ENCODE measurements at regions of chr2 and their contacts with region 1.

Region 1: GRCh38 chr2:112584134-112584890 is at the start of gene CHCHD5:
- DNase-seq: peak; percentile 86 to 97 (median 90)
- ATAC-seq: peak; percentile 92
- H3K4me3 ChIP-seq: peak within 1 kb of the TSS; percentile 65
- H3K27ac ChIP-seq: peak within 1 kb of the TSS; percentile 96
- H3K4me1 ChIP-seq: peaks cover 16 to 19% of the 10 kb centered on the region in 2 experiments; a peak in 4 of 5 replicates
- H3K27me3 ChIP-seq: no peaks in the 10 kb centered on the region
- CTCF ChIP-seq: peak; percentile 5 to 38 (median 18); a peak in 3 of 6 replicates
- EP300 ChIP-seq: peak; percentile 65
- POLR2A ChIP-seq: peak; percentile 95
- RAD21 ChIP-seq: no peak
- polyA plus RNA-seq, gene CHCHD5: 56.0 to 79.3 TPM

Region 2: GRCh38 chr2:111883661-111884591 is 700.4 kb before region 1 on chr2 and contains the start of gene ANAPC1:
- CTCF ChIA-PET with region 1: no interaction called
- POLR2A ChIA-PET with region 1: no interaction called
- in situ Hi-C with region 1: no loop called
- intact Hi-C with region 1: loop called (anchors 5 kb)
- DNase-seq: peak; percentile 84 to 94 (median 86)
- ATAC-seq: peak; percentile 95
- H3K4me3 ChIP-seq: peak within 1 kb of the TSS; percentile 98
- H3K27ac ChIP-seq: peak within 1 kb of the TSS; percentile 92
- H3K4me1 ChIP-seq: peaks cover 0 to 8% of the 10 kb centered on the region in 2 experiments; a peak in 3 of 5 replicates
- H3K27me3 ChIP-seq: no peaks in the 10 kb centered on the region
- CTCF ChIP-seq: no peak
- EP300 ChIP-seq: no peak
- POLR2A ChIP-seq: peak; percentile 98
- RAD21 ChIP-seq: no peak
- polyA plus RNA-seq, gene ANAPC1: 14.0 to 18.9 TPM

Region 3: GRCh38 chr2:112048887-112049286 is 535.4 kb before region 1 on chr2:
- CTCF ChIA-PET with region 1: interaction called, 10 read pairs
- POLR2A ChIA-PET with region 1: no interaction called
- in situ Hi-C with region 1: no loop called
- intact Hi-C with region 1: loop called (anchors 2 kb)
- DNase-seq: peak; percentile 27 to 68 (median 37)
- ATAC-seq: peak; percentile 87
- H3K4me3 ChIP-seq: no peak overlapping the region
- H3K27ac ChIP-seq: no peak overlapping the region
- H3K4me1 ChIP-seq: peaks cover 8 to 17% of the 10 kb centered on the region in 2 experiments; a peak in 4 of 5 replicates
- H3K27me3 ChIP-seq: no peaks in the 10 kb centered on the region
- CTCF ChIP-seq: peak; percentile 56 to 94 (median 67); a peak in 5 of 6 replicates
- EP300 ChIP-seq: no peak
- POLR2A ChIP-seq: no peak
- RAD21 ChIP-seq: peak; percentile 92

Region 4: GRCh38 chr2:112259509-112260294 is 324.6 kb before region 1 on chr2:
- CTCF ChIA-PET with region 1: interaction called, 3 read pairs
- POLR2A ChIA-PET with region 1: no interaction called
- in situ Hi-C with region 1: no loop called
- intact Hi-C with region 1: loop called (anchors 1 kb)
- DNase-seq: peak; percentile 52 to 90 (median 69)
- ATAC-seq: peak; percentile 76
- H3K4me3 ChIP-seq: no peak overlapping the region
- H3K27ac ChIP-seq: no peak overlapping the region; the same call in 2 of the 3 replicates
- H3K4me1 ChIP-seq: peaks cover 6 to 17% of the 10 kb centered on the region in 2 experiments
- H3K27me3 ChIP-seq: no peaks in the 10 kb centered on the region
- CTCF ChIP-seq: peak; percentile 93 to 99 (median 96)
- EP300 ChIP-seq: no peak
- POLR2A ChIP-seq: no peak
- RAD21 ChIP-seq: peak; percentile 89 to 92

Region 5: GRCh38 chr2:112343827-112344585 is 240.3 kb before region 1 on chr2:
- CTCF ChIA-PET with region 1: no interaction called
- POLR2A ChIA-PET with region 1: no interaction called
- in situ Hi-C with region 1: no loop called
- intact Hi-C with region 1: no loop called
- DNase-seq: no peak
- ATAC-seq: no peak; the same call in 2 of the 3 replicates
- H3K4me3 ChIP-seq: no peak overlapping the region
- H3K27ac ChIP-seq: no peak overlapping the region
- H3K4me1 ChIP-seq: peaks cover 0 to 8% of the 10 kb centered on the region in 2 experiments; a peak in 2 of 5 replicates
- H3K27me3 ChIP-seq: no peaks in the 10 kb centered on the region
- CTCF ChIP-seq: no peak
- EP300 ChIP-seq: no peak
- POLR2A ChIP-seq: no peak
- RAD21 ChIP-seq: no peak

Region 6: GRCh38 chr2:112481050-112481527 is 103.2 kb before region 1 on chr2:
- CTCF ChIA-PET with region 1: interaction called, 18 read pairs
- POLR2A ChIA-PET with region 1: interaction called, 4 read pairs
- in situ Hi-C with region 1: no loop called
- intact Hi-C with region 1: loop called (anchors 1 kb)
- DNase-seq: peak; percentile 79 to 94 (median 84)
- ATAC-seq: peak; percentile 89
- H3K4me3 ChIP-seq: peak overlapping the region; percentile 76
- H3K27ac ChIP-seq: peak overlapping the region; percentile 91
- H3K4me1 ChIP-seq: peaks cover 13 to 25% of the 10 kb centered on the region in 2 experiments; a peak in 4 of 5 replicates
- H3K27me3 ChIP-seq: no peaks in the 10 kb centered on the region; a peak in 1 of 5 replicates
- CTCF ChIP-seq: peak; percentile 87 to 96 (median 94)
- EP300 ChIP-seq: peak; percentile 36; the same call in 1 of the 2 replicates
- POLR2A ChIP-seq: peak; percentile 66
- RAD21 ChIP-seq: peak; percentile 79 to 88

Region 7: DNA sequence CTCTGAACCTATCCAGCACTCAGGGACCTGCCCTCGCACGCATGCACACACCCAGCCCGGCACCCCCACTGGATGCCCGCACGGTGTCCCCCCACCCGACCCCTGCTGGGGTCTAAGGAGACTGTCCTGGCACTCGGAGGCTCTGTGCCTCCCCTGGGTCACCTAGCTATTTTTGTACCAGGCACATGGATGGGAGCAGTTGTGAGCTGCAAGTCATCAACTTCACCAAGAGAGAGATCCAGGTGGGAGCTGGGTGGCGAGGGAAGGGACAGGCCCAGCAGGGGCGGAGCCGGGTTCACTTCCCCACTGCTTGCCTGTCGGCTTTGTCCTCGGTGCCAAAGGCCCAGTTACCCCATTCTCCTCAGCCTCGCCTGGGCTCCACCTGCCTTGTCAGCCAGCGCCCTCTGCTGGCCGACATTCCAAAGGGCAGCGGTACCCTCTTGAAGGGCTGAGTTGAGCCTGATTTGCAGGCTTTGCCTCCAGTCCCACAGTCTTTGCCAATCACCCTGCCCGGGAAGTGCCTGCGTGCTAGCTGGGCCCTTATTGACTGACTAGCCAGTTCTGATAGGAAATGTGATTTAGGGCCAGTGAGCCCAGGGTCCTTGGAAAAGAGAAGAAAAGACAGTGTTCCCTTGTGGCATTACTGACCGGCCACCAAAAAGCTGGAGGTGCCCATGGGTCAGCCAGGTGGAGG is 142.3 kb after region 1 on chr2:
- CTCF ChIA-PET with region 1: interaction called, 7 read pairs
- POLR2A ChIA-PET with region 1: interaction called, 4 read pairs
- in situ Hi-C with region 1: no loop called
- intact Hi-C with region 1: loop called (anchors 1 kb)
- DNase-seq: peak; percentile 89 to 95 (median 92)
- ATAC-seq: peak; percentile 90
- H3K4me3 ChIP-seq: no peak overlapping the region
- H3K27ac ChIP-seq: no peak overlapping the region
- H3K4me1 ChIP-seq: peaks cover 31 to 72% of the 10 kb centered on the region in 2 experiments
- H3K27me3 ChIP-seq: no peaks in the 10 kb centered on the region
- CTCF ChIP-seq: peak; percentile 95 to 98 (median 97)
- EP300 ChIP-seq: no peak
- POLR2A ChIP-seq: no peak
- RAD21 ChIP-seq: peak; percentile 99 to 100

Region 8: GRCh38 chr2:112836695-112837117 is 252.4 kb after region 1 on chr2 and contains the start of gene IL1B:
- CTCF ChIA-PET with region 1: no interaction called
- POLR2A ChIA-PET with region 1: no interaction called
- in situ Hi-C with region 1: no loop called
- intact Hi-C with region 1: no loop called
- DNase-seq: no peak
- ATAC-seq: no peak
- H3K4me3 ChIP-seq: no peak within 1 kb of the TSS
- H3K27ac ChIP-seq: no peak within 1 kb of the TSS
- H3K4me1 ChIP-seq: no peaks in the 10 kb centered on the region
- H3K27me3 ChIP-seq: peaks cover 20 to 38% of the 10 kb centered on the region in 2 experiments
- CTCF ChIP-seq: no peak
- EP300 ChIP-seq: no peak
- POLR2A ChIP-seq: no peak
- RAD21 ChIP-seq: no peak
- polyA plus RNA-seq, gene IL1B: not detected

Measured in K562 (cell line).